ENCODE measurements at regions of chr17 and their contacts with region 1.

Region 1: GRCh38 chr17:44123356-44124117 is at the start of gene HDAC5:
- DNase-seq: peak; percentile 86 to 97
- H3K4me3 ChIP-seq: peak within 1 kb of the TSS; percentile 99 to 100
- H3K27ac ChIP-seq: peak within 1 kb of the TSS; percentile 97 to 99
- H3K4me1 ChIP-seq: peaks cover 18 to 34% of the 10 kb centered on the region in 2 donors
- H3K27me3 ChIP-seq: no peaks in the 10 kb centered on the region
- CTCF ChIP-seq: peak; percentile 60 to 71 (median 65)
- total RNA-seq, gene HDAC5: 189 TPM

Region 2: GRCh38 chr17:42642336-42642735 is 1481.2 kb before region 1 on chr17:
- intact Hi-C with region 1: no loop called
- DNase-seq: no peak
- H3K4me3 ChIP-seq: no peak overlapping the region
- H3K27ac ChIP-seq: no peak overlapping the region
- H3K4me1 ChIP-seq: no peaks in the 10 kb centered on the region
- H3K27me3 ChIP-seq: no peaks in the 10 kb centered on the region
- CTCF ChIP-seq: no peak

Region 3: GRCh38 chr17:44006598-44007345 is 116.8 kb before region 1 on chr17:
- intact Hi-C with region 1: loop called (anchors 5 kb)
- DNase-seq: peak; percentile 98
- H3K4me3 ChIP-seq: peak overlapping the region; percentile 51 to 67
- H3K27ac ChIP-seq: peak overlapping the region in 1 of 2 donors; percentile 32
- H3K4me1 ChIP-seq: peaks cover 4 to 31% of the 10 kb centered on the region in 2 donors
- H3K27me3 ChIP-seq: no peaks in the 10 kb centered on the region
- CTCF ChIP-seq: peak; percentile 39 to 55 (median 53)

Region 4: GRCh38 chr17:44070455-44071197 is 52.9 kb before region 1 on chr17 and contains the start of gene G6PC3:
- intact Hi-C with region 1: loop called (anchors 1 kb)
- DNase-seq: peak; percentile 83 to 98
- H3K4me3 ChIP-seq: peak within 1 kb of the TSS; percentile 66 to 68
- H3K27ac ChIP-seq: peak within 1 kb of the TSS; percentile 84 to 89
- H3K4me1 ChIP-seq: peaks cover 5 to 35% of the 10 kb centered on the region in 2 donors
- H3K27me3 ChIP-seq: no peaks in the 10 kb centered on the region
- CTCF ChIP-seq: peak in 1 of 3 experiments; percentile 14
- total RNA-seq, gene G6PC3: 111 TPM

Region 5: DNA sequence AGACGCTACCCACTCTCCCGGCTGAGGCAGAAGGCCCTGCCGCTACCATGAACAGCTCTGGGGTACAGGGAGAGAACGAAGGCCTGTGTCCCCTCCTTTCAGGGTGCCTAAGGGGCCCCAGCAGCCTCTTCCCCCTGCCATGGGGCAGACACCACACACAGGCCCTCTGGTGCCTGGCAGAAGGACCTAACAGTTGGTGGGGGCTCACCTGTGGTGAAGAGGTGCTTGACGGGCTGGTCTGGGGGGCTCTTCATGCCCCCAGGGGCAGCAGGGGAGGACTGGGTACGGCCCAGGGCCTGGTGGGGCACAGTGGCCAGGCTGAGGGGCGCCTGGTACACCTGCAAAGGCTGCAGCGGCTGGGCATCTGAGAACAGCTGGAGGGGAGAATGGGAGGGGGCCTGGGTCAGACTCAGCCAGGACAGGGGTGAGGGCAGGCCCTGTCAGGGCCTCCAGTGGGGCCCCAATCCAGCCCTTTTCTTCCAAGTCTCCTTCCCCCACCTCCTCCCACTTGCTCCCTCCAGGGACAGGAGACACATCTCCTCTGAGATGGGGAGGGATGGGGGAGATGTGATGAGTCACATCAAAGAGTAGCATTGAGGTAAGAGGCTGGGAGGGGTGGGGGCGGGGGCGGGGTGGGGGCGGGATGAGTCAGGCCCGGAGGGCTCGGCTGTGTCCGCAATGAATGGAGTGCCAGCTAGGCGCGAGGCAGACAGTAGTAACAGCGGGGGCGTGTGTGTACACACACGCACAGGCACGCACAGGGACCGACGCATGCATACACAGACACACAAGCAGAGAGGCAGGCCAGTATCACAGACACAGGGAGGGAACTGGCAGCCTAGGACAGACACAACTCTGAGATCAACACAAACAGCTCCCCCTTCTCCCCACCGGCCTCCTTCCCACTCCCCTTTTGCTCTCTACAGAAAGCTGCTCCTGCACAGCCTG is 36.9 kb before region 1 on chr17:
- intact Hi-C with region 1: loop called (anchors 5 kb)
- DNase-seq: no peak
- H3K4me3 ChIP-seq: no peak overlapping the region
- H3K27ac ChIP-seq: peak overlapping the region; percentile 69 to 76
- H3K4me1 ChIP-seq: no peaks in the 10 kb centered on the region
- H3K27me3 ChIP-seq: no peaks in the 10 kb centered on the region
- CTCF ChIP-seq: no peak

Region 6: DNA sequence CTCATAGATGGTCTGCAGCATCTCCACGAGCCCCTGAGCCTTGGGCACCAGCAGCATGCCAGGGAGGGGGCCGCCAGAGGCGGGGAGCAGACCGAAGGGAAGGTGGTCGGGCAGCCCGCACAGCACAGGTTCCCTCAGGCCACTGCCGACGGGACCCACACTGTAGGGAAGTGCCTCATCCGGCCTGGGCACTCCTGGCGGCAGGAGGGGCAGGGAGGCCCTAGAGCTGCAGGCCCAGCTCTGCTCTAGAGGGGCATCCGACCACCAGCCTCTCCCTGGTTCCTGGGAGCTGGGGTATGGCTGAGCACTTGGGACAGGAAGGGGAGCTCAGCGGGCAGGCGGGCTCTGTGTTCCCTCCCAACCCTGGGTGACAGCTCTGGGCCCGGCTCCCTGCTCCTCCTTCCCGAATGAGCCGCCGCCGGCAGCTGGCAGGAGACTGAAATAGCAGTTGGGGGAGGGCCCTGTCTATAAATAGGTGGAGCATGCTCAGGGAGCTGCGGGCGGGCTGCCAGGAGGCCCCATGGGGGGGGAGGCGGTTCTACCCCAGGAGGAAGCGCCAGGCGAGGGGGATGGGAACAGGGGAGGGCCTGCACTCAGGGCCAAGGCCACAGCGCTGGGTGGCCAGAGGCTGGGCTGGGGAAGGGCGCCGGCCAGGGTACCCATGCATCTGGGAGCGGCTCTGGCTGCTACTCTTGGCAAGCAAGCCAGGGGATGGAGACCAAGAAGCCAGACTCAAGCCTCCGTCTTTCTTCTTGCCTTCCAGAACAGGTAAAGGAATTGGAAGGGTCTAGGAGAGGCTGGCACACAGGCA is 12.5 kb before region 1 on chr17:
- intact Hi-C with region 1: loop called (anchors 1 kb)
- DNase-seq: peak; percentile 92 to 99
- H3K4me3 ChIP-seq: peak overlapping the region; percentile 45 to 68
- H3K27ac ChIP-seq: peak overlapping the region; percentile 81 to 95
- H3K4me1 ChIP-seq: peaks cover 32 to 72% of the 10 kb centered on the region in 2 donors
- H3K27me3 ChIP-seq: no peaks in the 10 kb centered on the region
- CTCF ChIP-seq: no peak

Region 7: DNA sequence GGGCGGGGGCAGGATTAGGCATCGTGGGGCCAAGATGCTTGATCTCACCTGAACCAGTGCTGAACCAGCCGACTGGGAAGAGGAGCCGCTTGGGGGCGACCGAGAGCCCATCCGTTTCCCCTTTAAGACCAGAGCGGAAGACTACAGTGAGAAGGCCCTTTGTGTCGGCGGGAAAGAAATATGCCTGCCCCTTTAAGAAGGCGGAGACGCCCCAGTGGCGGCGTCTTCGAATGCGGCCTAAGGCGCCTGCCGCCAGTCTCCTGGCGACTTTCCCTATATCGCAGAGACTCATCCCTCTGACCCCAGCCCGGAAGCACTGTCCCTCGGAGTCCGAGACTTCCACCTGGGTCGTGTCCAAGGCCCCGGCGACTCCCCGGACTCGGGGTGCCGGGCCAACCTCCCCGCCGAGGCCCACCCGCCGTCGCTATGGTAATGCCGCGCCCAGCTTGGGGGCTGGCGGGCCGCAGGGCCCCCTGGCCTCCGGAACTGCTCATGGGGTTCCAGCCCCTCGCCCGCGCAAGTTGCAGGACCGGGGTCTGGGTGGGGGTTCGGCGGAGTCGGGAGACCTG is 18.3 kb after region 1 on chr17 and contains the start of gene HROB:
- intact Hi-C with region 1: loop called (anchors 1 kb)
- DNase-seq: peak; percentile 76 to 98
- H3K4me3 ChIP-seq: peak within 1 kb of the TSS; percentile 50 to 76
- H3K27ac ChIP-seq: no peak within 1 kb of the TSS
- H3K4me1 ChIP-seq: peaks cover 0 to 10% of the 10 kb centered on the region in 2 donors
- H3K27me3 ChIP-seq: no peaks in the 10 kb centered on the region
- CTCF ChIP-seq: peak; percentile 90 to 95 (median 93)
- total RNA-seq, gene HROB: not detected

Region 8: GRCh38 chr17:44170499-44171201 is 47.1 kb after region 1 on chr17 and contains the start of gene ASB16:
- intact Hi-C with region 1: loop called (anchors 2 kb)
- DNase-seq: no peak
- H3K4me3 ChIP-seq: peak within 1 kb of the TSS; percentile 42 to 62
- H3K27ac ChIP-seq: peak within 1 kb of the TSS; percentile 59 to 87
- H3K4me1 ChIP-seq: peaks cover 4 to 15% of the 10 kb centered on the region in 2 donors
- H3K27me3 ChIP-seq: no peaks in the 10 kb centered on the region
- CTCF ChIP-seq: no peak
- total RNA-seq, gene ASB16: not detected

Region 9: GRCh38 chr17:44533533-44534246 is 410.2 kb after region 1 on chr17:
- intact Hi-C with region 1: no loop called
- DNase-seq: peak in 1 of 2 donors; percentile 93
- H3K4me3 ChIP-seq: peak overlapping the region in 1 of 2 donors; percentile 49
- H3K27ac ChIP-seq: peak overlapping the region; percentile 62 to 74
- H3K4me1 ChIP-seq: peaks cover 5% of the 10 kb centered on the region in 2 donors
- H3K27me3 ChIP-seq: no peaks in the 10 kb centered on the region
- CTCF ChIP-seq: peak; percentile 93 to 98 (median 98)

Measured in ascending aorta (tissue), 2 donors.